ENCODE measurements at regions of chr4 and their contacts with region 1.

Region 1: GRCh38 chr4:54941994-54942552 is 183.3 kb downstream of the KDR start:
- DNase-seq: peak in 3 of 5 donors; percentile 39 to 51 (median 41)
- ATAC-seq: peak; percentile 59 to 93 (median 64)
- H3K4me3 ChIP-seq: peak overlapping the region in 2 of 12 donors; percentile 17 to 18
- H3K27ac ChIP-seq: peak overlapping the region in 8 of 12 donors; percentile 1 to 66 (median 36)
- H3K4me1 ChIP-seq: peaks cover 0 to 16% (median 4%) of the 10 kb centered on the region in 12 donors
- H3K27me3 ChIP-seq: no peaks in the 10 kb centered on the region
- CTCF ChIP-seq: no peak
- POLR2A ChIP-seq: no peak

Region 2: GRCh38 chr4:54658252-54659093 is 283.6 kb before region 1 on chr4:
- intact Hi-C with region 1: loop called in 4 of 10 experiments (anchors 10 kb)
- DNase-seq: peak; percentile 46 to 75 (median 53)
- ATAC-seq: peak; percentile 34 to 84 (median 82)
- H3K4me3 ChIP-seq: peak overlapping the region; percentile 27 to 75 (median 62)
- H3K27ac ChIP-seq: peak overlapping the region in 8 of 12 donors; percentile 22 to 60 (median 34)
- H3K4me1 ChIP-seq: peaks cover 0 to 33% (median 28%) of the 10 kb centered on the region in 12 donors
- H3K27me3 ChIP-seq: peaks cover 0 to 38% (median 0%) of the 10 kb centered on the region in 9 donors
- CTCF ChIP-seq: peak in 10 of 12 donors; percentile 17 to 60 (median 32)
- POLR2A ChIP-seq: no peak

Region 3: DNA sequence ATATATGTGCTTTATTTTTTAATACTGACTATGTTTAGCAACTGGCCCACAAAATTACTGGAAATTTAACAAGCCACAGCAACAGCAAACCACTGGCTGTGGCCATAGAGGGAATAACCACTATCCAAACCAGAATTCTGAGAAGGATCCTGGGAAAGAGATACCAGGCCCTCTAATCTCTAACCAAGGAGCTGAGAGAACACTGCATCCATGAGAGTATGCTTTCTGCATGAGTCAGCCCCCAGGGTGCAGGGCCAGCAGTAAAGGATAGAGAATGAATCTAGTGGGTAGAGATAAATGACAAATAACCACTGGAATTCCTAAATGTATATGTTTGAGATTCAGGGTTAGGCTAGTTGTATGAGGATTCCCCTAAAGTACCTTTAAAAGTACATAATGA is 62.5 kb before region 1 on chr4:
- intact Hi-C with region 1: no loop called
- DNase-seq: no peak
- ATAC-seq: no peak
- H3K4me3 ChIP-seq: no peak overlapping the region
- H3K27ac ChIP-seq: no peak overlapping the region
- H3K4me1 ChIP-seq: no peaks in the 10 kb centered on the region
- H3K27me3 ChIP-seq: no peaks in the 10 kb centered on the region
- CTCF ChIP-seq: no peak
- POLR2A ChIP-seq: no peak

Region 4: GRCh38 chr4:55008166-55009070 is 66.3 kb after region 1 on chr4:
- intact Hi-C with region 1: no loop called
- DNase-seq: no peak
- ATAC-seq: peak in 3 of 4 donors; percentile 24 to 50 (median 41)
- H3K4me3 ChIP-seq: no peak overlapping the region
- H3K27ac ChIP-seq: no peak overlapping the region
- H3K4me1 ChIP-seq: peaks cover 0 to 21% (median 10%) of the 10 kb centered on the region in 12 donors
- H3K27me3 ChIP-seq: no peaks in the 10 kb centered on the region
- CTCF ChIP-seq: peak; percentile 14 to 48 (median 26)
- POLR2A ChIP-seq: no peak

Region 5: DNA sequence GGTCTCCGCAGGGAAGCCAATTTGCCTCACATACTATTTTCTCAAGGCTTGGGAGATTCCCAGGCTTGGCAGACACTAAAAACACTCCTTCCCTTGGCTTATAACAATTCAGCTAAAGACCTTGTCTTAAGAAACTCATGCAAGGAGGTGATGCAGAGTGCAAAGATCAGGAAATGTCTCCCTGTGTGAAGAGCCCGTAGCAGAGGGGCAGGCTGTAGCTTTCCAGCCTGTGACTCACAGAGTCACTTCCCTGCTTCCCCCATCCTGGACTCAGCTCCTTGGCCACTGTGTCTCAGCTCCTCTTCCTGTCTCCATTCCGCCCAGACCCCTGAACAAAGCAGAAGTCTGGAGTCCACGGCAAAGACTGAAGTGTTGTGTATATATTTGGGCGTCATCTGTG is 127.2 kb after region 1 on chr4:
- intact Hi-C with region 1: no loop called
- DNase-seq: peak in 3 of 5 donors; percentile 57 to 65 (median 65)
- ATAC-seq: peak; percentile 86 to 98 (median 90)
- H3K4me3 ChIP-seq: no peak overlapping the region
- H3K27ac ChIP-seq: peak overlapping the region; percentile 30 to 80 (median 68)
- H3K4me1 ChIP-seq: peaks cover 0 to 17% (median 0%) of the 10 kb centered on the region in 12 donors
- H3K27me3 ChIP-seq: peaks cover 0 to 4% (median 0%) of the 10 kb centered on the region in 9 donors
- CTCF ChIP-seq: no peak
- POLR2A ChIP-seq: no peak